Dorsolateral prefrontal cortex (tissue), 120 donors: ENCODE measurements at regions of chr16 and their contacts with region 1.

Region 1: GRCh38 chr16:1019231-1020090 is 37.9 kb downstream of the SOX8 start:
- DNase-seq: peak; percentile 50 to 87 (median 79)
- H3K4me3 ChIP-seq: peak overlapping the region; percentile 14 to 61 (median 41)
- H3K27ac ChIP-seq: peak overlapping the region; percentile 49 to 96 (median 90)
- H3K27me3 ChIP-seq: peaks cover 0 to 8% (median 0%) of the 10 kb centered on the region in 45 donors
- CTCF ChIP-seq: peak in 11 of 56 donors; percentile 6 to 49 (median 18)

Region 2: DNA sequence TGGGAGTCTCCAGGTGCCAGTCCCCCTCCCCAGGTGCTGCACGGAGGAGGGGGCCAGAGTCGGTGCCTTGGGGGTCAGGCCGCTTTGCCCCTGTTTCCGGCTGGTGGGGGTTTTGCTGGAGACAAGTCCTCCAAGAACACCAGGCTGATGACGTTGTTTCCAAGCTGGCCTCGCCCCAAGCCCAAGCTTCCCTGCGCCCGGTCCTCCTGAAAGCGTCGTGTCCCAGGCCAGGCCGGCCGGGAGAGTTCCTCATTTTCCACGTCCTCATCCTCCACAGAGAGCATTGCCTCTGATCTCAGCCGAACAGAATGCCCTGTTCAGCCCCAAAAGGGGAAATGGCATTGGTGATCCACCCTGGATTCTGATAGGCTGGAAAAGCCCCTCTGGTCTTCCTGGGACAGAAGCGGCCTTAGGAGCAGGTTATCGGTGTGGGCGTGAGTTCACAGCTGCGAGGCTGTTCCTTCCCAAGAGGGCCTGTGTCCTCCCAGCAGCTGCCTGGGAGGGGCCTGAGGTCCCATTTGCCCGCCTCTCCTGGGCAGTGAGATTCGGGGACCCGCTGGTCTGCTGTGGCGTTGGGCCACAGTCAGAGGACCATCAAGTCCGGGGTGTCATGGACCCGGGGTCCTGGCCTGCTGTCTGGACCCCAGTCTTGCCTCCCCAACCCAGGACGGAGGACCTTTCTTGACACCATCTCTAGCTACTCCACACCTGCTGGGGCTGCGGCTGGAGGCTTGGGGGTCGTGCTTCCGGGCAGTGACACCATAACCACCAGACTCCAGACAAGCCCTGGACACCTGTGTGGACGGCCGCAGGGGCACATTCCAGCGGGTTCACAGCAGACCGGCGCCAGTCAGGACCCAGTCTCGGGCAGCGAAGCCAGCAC is 30.7 kb before region 1 on chr16:
- intact Hi-C with region 1: loop called in 1 of 2 experiments (anchors 2 kb)
- DNase-seq: no peak
- H3K4me3 ChIP-seq: no peak overlapping the region
- H3K27ac ChIP-seq: peak overlapping the region in 55 of 59 donors; percentile 2 to 99 (median 81)
- H3K27me3 ChIP-seq: peaks cover 0 to 1% (median 0%) of the 10 kb centered on the region in 45 donors
- CTCF ChIP-seq: no peak

Region 3: DNA sequence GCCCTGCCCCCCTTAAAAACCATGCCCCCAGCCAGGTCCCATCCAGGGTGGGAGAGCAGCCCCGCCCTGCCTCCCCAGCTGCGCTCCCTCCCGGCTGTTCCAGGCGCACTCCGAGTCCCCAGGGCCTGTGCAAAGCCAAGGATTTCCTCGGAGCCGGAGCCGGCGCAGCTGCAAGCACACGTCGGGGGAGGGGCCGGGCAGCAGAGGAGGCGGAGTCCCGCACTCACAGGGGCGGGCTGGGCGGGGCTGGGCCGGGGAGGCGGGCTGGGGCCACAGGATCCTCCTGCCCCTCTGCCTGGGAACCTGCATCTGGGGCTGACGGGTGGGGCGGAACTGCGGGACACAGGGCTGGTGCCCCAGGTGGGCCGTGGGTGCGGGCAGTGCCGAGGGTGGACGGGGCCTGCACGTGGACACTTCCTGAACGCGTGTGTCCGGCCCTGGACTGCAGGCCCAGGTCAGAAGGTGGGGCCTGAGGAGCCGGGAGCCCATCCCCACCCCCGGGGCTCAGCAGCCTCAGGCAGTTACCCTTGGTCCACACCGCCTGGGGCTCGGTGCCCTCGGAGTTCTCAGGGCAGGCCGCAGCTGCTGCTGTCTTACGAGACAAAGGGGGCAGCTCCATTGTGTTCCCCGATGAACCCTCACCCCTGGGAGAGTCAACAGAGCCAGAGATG is 29.1 kb after region 1 on chr16:
- intact Hi-C with region 1: loop called in 1 of 2 experiments (anchors 2 kb)
- DNase-seq: peak in 9 of 10 donors; percentile 73 to 88 (median 83)
- H3K4me3 ChIP-seq: peak overlapping the region in 5 of 59 donors; percentile 3 to 30 (median 8)
- H3K27ac ChIP-seq: peak overlapping the region; percentile 68 to 99 (median 94)
- H3K27me3 ChIP-seq: peaks cover 0 to 3% (median 0%) of the 10 kb centered on the region in 45 donors
- CTCF ChIP-seq: peak in 1 of 56 donors; percentile 10

Region 4: DNA sequence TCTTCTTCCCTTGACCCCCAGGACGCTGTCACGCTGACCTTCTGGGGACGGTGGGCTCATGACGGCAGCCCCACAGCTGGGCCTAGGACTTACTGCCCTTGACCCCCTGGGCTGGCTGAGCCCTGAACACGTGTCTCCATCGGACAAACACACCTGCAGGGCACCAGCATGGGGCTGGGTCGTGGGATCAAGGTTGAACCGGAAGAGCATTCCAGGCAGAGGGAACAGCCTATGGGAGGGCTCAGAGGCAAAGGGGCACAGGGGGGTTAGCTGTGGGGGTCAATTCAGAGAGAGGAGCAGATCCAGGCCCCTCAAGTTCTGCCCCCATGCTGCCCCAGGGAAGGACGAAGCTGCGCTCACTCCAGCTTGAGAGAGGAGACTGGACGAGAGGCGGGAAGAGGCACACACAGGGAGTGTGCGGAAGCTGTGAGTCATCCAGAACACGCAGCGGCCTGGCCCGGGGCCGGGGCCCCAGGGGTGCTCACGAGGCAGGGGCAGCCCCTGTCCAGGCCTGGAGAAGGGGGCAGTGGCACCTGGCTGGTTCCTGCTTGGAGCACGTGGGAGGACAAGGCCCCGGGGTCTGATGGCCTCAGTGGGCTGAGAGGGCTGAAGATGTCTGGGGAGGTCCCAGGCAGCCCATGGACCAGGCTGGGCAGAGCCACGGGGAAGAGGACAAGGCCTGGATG is 62.9 kb after region 1 on chr16:
- intact Hi-C with region 1: no loop called
- DNase-seq: no peak
- H3K4me3 ChIP-seq: no peak overlapping the region
- H3K27ac ChIP-seq: no peak overlapping the region
- H3K27me3 ChIP-seq: peaks cover 0 to 80% (median 32%) of the 10 kb centered on the region in 45 donors
- CTCF ChIP-seq: no peak